KBM-7 (cell line): ENCODE measurements at regions of chr11 and their contacts with region 1.

Region 1: DNA sequence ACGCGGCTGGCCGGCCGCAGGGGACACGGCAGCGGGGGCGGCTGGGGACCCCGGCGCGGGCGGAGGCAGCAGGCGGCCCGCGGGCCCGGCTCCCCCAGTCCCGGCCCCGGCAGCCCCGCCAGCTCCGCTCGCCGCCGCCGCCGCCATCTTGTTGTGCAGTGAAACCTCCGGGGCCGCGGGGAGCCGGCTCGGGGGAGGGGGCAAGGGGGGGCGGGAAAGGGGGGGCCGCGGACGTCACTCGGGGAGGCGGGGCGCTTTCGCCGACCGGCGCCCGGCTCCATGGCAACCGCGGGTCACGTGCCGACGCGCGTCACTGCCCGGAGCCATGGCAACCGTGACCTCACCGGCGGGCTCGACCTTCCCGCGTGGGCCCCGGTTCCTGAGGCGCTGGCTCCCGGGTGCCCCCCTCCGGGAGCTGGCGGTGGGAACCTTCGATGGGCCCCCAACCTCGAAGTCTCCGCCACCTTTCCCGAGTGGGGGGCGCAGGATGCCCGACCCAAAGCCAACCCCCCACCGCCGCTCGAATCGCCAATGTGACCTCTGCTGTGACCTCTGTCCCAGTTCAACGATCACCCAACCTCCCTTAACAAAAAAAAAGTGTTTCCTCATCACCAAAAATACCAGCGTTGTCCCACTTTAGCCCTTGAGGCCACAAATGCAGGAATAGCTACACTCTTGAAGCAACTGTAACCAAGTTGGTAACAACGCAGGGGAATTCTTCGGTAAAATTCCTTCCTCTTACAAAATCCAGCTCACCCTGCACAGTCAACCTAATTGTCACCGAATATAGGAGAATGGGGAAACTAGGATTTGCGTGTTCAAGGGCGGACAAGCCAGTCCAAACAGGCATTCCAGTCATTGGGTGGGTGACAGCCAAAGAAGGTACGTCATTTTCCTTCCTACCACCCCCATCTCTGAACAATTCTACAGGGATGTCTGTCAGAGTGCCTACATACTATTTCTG is at the start of gene SIK3:
- DNase-seq: peak; percentile 86

Region 2: GRCh38 chr11:116879800-116880625 is 218.5 kb before region 1 on chr11:
- in situ Hi-C with region 1: loop called (anchors 25 kb)
- DNase-seq: peak; percentile 77